Dorsolateral prefrontal cortex (tissue), 120 donors: ENCODE measurements at regions of chr2 and their contacts with region 1.

Region 1: DNA sequence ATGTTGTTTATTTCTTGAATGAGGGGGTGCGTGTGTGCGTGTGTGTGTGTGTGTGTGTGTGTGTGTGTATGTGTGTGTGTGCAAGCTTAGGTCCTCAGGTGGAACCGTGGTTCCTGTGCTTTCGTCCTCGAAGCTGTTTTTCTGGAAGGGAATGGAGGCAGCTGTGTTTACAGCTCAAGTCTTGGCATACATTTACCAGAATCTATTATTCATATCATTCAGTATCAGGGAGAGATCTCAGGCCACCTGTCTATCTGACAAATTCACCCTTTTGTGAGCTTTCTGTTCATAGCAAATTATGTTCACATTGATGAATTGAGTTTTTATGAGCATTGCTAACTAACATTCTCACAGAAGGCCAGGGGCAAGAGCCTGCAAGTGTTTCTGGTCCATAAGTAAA is 550.4 kb downstream of the ARHGAP15 start:
- DNase-seq: no peak
- H3K4me3 ChIP-seq: no peak overlapping the region
- H3K27ac ChIP-seq: no peak overlapping the region
- H3K27me3 ChIP-seq: no peaks in the 10 kb centered on the region
- CTCF ChIP-seq: no peak

Region 2: DNA sequence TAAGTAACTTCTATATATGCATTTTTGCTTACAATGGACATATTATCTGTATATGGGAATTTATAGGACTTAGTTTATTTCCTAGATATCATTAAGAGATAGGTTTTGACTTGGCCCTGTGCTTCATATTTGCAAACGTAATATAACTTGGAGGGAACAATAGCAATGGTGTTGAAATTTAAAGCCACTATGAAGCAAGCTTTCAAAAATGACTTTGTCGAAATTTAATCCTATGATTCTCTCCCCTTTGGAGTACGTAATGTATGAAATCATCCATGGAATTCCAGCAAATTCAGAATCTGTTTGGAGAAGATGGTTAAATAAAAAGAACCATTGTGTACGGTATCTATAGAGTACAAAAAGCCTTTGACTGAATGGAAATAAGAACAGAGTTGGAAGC is 64.1 kb before region 1 on chr2:
- intact Hi-C with region 1: loop called in 1 of 2 experiments (anchors 5 kb)
- DNase-seq: no peak
- H3K4me3 ChIP-seq: peak overlapping the region in 3 of 59 donors; percentile 6 to 27 (median 10)
- H3K27ac ChIP-seq: peak overlapping the region in 28 of 59 donors; percentile 2 to 77 (median 48)
- H3K27me3 ChIP-seq: no peaks in the 10 kb centered on the region
- CTCF ChIP-seq: no peak

Region 3: GRCh38 chr2:143730155-143730952 is 50.7 kb after region 1 on chr2:
- intact Hi-C with region 1: no loop called
- DNase-seq: no peak
- H3K4me3 ChIP-seq: no peak overlapping the region
- H3K27ac ChIP-seq: no peak overlapping the region
- H3K27me3 ChIP-seq: no peaks in the 10 kb centered on the region
- CTCF ChIP-seq: no peak